HEK293T (cell line): ENCODE measurements at regions of chr6 and their contacts with region 1.

Region 1: DNA sequence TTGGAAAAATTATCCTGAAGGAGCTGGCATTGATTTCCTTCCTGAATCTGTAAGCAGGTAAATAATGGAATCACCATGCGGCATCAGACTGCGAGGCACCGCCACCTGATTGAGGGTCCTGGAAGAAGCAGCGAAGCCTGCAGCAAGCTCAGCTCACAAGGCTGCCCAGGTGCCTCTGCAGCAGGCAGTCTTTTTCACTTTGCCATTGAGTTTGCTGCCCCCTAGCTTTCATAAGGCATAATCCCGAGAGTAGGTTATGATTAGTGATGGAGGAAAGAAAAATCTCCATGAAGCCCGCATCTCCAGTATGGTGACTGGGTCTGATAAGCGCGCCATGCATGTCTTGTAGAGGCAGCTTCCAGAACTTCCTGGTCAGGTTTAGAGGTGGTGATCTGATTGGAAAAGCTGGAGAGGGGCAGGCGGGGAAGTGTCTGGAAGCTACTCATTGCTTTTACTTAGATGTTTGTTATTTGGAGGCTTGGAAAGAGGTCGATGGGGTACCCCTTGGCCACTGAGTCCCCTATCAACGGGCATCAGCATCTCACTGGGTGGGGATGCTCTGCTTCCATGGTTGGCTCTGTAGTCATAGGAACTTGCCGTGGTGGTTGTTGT is 26.7 kb downstream of the IYD start:
- DNase-seq: peak; percentile 79

Region 2: DNA sequence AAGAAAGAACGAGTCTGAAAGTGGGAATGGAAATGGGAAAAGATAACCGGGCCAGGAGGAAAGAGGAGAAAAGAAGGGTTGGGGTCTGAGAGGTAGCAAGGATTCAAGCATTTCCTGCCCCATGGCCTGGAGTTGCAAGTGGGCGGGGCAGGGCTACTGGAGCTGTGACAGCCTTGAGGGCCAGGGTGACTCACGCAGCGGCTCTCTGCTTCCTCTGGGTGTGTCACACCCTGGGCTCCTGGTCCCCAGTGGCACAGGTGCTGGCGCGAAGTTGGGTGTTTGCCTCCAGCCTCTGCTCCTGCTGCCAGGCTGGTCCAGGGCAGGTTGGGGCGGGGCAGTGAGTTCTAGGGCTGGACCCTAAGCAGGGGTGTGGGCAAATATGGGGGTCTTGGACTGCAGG is 323.3 kb before region 1 on chr6:
- CTCF ChIA-PET with region 1: interaction called, 16 read pairs
- POLR2A ChIA-PET with region 1: no interaction called
- DNase-seq: peak; percentile 39

Region 3: DNA sequence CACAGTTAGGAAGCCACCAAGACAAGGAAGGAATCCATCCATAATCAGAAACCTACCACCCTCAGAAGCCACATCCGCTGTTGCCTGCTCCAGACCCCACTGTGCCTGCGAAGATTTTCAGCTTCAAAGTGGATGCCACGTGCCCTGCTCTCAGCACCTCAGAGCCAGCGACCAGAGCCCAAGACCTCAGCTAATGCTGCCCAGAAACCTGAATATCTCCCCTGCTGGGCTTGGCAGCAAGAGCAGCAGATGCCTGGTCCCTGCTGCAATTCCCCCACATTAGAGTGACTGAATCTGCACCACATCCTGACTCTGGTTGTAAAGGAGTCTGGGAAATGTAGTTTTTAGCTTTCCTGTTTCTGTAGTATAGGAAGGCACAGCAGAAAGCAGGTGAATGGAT is 315.9 kb before region 1 on chr6:
- CTCF ChIA-PET with region 1: interaction called, 18 read pairs
- POLR2A ChIA-PET with region 1: no interaction called
- DNase-seq: no peak

Region 4: DNA sequence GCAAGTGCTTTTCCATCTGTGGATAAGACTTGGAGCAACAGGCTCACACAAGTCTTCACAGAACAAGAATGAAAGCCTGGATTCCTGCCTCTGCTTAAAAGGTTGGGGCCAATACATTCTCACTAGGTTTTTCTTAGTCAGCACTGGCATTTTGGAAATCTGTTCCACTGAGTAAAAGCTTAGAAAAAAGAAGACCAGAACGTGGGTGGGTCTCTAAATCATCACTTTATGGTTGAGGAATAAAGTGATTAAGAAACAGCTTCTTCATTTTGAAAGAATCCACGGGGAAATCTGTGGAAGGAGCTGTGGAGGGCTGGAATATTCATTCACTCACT is 242.0 kb before region 1 on chr6:
- CTCF ChIA-PET with region 1: no interaction called
- POLR2A ChIA-PET with region 1: no interaction called
- DNase-seq: no peak

Region 5: GRCh38 chr6:150238336-150238741 is 157.2 kb before region 1 on chr6:
- CTCF ChIA-PET with region 1: no interaction called
- POLR2A ChIA-PET with region 1: no interaction called
- DNase-seq: no peak

Region 6: DNA sequence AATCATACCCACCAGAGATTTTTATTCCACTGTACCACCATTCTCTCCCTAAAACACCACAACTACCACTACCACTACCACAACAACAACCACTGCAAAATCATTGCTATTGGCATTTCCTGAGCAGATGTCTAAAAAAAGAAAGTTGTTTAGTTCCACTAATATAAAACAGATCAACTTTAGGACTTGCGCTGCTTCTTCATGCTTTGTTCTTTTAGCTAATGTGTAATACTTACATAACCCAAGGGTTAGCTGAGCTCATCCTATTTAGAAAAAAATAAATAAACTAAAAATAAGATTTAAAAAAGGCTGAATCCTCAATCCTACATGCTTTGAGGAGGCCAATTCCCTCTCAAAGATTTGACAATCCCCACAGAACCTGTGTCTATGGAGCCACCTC is 15.2 kb before region 1 on chr6:
- CTCF ChIA-PET with region 1: interaction called, 10 read pairs
- POLR2A ChIA-PET with region 1: no interaction called
- DNase-seq: no peak

Region 7: GRCh38 chr6:150409576-150410066 is 14.1 kb after region 1 on chr6:
- CTCF ChIA-PET with region 1: interaction called, 17 read pairs
- POLR2A ChIA-PET with region 1: no interaction called
- DNase-seq: no peak